Sciatic nerve (tissue), 2 donors: ENCODE measurements at regions of chr9 and their contacts with region 1.

Region 1: DNA sequence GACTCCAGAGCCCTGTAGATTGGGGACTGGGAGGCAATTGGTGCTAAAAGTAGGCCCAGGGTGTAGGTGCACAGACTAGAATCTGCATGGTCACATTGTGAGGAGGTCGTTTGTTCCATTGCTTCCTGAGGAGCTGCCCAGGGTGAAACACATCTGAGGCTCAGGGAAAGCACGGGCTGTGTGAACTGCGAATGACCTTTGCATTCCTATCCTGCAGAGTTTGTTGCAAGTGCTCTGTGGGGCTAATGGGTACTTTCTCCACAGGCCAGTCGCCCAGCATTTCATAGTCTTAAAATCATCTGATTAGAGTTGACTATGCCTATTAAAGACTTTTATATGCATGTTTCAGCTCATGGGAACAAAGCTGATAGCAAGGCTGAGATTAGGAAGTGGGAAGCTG is 14.4 kb upstream of the SLC46A2 start:
- DNase-seq: no peak
- ATAC-seq: no peak

Region 2: DNA sequence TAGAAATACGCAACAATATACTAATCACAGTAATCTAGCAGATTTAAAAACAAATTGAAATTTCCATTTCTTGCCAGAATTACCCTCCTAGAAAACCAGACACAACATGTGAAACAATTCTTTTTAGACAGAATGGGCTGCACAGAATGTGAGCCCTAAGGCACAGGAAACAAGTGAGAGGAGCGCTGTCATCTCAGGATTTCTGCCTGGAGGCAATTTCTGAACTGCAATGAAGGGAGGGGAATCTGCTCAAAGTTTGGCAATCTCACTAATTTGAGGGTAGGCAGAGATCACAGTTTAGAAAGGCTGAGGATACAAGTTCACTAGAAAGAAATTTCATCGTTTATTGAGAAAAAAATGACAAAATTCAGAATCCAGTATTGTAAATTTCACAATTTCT is 257.5 kb before region 1 on chr9:
- intact Hi-C with region 1: no loop called
- DNase-seq: no peak
- ATAC-seq: no peak

Region 3: GRCh38 chr9:113669522-113670115 is 764.5 kb after region 1 on chr9:
- intact Hi-C with region 1: loop called (anchors 10 kb)
- DNase-seq: no peak
- ATAC-seq: no peak